CD8-positive, alpha-beta T cell (primary cell): ENCODE measurements at regions of chr3 and their contacts with region 1.

Region 1: GRCh38 chr3:11236595-11237461 is 35.4 kb upstream of the ATG7 start:
- DNase-seq: peak; percentile 65 to 86 (median 77)
- ATAC-seq: peak; percentile 68
- H3K4me3 ChIP-seq: no peak overlapping the region
- H3K4me3 Mint-ChIP-seq: no peak overlapping the region
- H3K27ac ChIP-seq: no peak overlapping the region
- H3K27ac Mint-ChIP-seq: no peak overlapping the region
- H3K4me1 ChIP-seq: no peaks in the 10 kb centered on the region
- H3K4me1 Mint-ChIP-seq: no peaks in the 10 kb centered on the region
- H3K27me3 ChIP-seq: no peaks in the 10 kb centered on the region
- H3K27me3 Mint-ChIP-seq: peaks cover 7% of the 10 kb centered on the region
- CTCF ChIP-seq: peak; percentile 95

Region 2: DNA sequence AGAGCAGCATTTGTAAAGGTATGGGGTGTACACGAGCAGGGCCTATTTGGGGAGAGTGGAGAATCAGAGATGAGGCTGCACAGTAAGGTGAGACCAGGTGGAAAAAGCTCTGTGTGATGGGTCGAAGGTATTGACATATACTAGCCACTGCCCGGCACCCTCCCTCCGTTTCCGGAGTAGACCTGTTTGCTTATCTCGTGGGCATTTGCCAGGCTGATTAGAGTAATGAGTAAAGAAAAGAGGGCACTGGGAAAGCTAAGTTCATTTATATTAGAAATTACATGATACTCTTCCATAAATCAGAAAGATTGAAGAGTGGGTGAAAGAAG is 10.8 kb before region 1 on chr3:
- CTCF ChIA-PET with region 1: interaction called, 10 read pairs
- POLR2A ChIA-PET with region 1: no interaction called
- intact Hi-C with region 1: no loop called
- DNase-seq: no peak
- ATAC-seq: no peak
- H3K4me3 ChIP-seq: no peak overlapping the region
- H3K4me3 Mint-ChIP-seq: no peak overlapping the region
- H3K27ac ChIP-seq: no peak overlapping the region
- H3K27ac Mint-ChIP-seq: no peak overlapping the region
- H3K4me1 ChIP-seq: peaks cover 12% of the 10 kb centered on the region
- H3K4me1 Mint-ChIP-seq: peaks cover 15% of the 10 kb centered on the region
- H3K27me3 ChIP-seq: no peaks in the 10 kb centered on the region
- H3K27me3 Mint-ChIP-seq: no peaks in the 10 kb centered on the region
- CTCF ChIP-seq: no peak

Region 3: GRCh38 chr3:11250902-11251813 is 14.3 kb after region 1 on chr3:
- CTCF ChIA-PET with region 1: interaction called, 28 read pairs
- POLR2A ChIA-PET with region 1: no interaction called
- intact Hi-C with region 1: no loop called
- DNase-seq: no peak
- ATAC-seq: peak; percentile 36
- H3K4me3 ChIP-seq: no peak overlapping the region
- H3K4me3 Mint-ChIP-seq: no peak overlapping the region
- H3K27ac ChIP-seq: no peak overlapping the region
- H3K27ac Mint-ChIP-seq: peak overlapping the region; percentile 53
- H3K4me1 ChIP-seq: peaks cover 6% of the 10 kb centered on the region
- H3K4me1 Mint-ChIP-seq: peaks cover 15% of the 10 kb centered on the region
- H3K27me3 ChIP-seq: no peaks in the 10 kb centered on the region
- H3K27me3 Mint-ChIP-seq: peaks cover 9% of the 10 kb centered on the region
- CTCF ChIP-seq: no peak

Region 4: GRCh38 chr3:11651900-11652299 is 415.1 kb after region 1 on chr3:
- CTCF ChIA-PET with region 1: interaction called, 9 read pairs
- POLR2A ChIA-PET with region 1: interaction called, 4 read pairs
- intact Hi-C with region 1: loop called in 1 of 2 experiments (anchors 1 kb)
- DNase-seq: peak in 2 of 9 experiments; percentile 56 to 67
- ATAC-seq: no peak
- H3K4me3 ChIP-seq: no peak overlapping the region
- H3K4me3 Mint-ChIP-seq: no peak overlapping the region
- H3K27ac ChIP-seq: no peak overlapping the region
- H3K27ac Mint-ChIP-seq: no peak overlapping the region
- H3K4me1 ChIP-seq: peaks cover 11% of the 10 kb centered on the region
- H3K4me1 Mint-ChIP-seq: peaks cover 13% of the 10 kb centered on the region
- H3K27me3 ChIP-seq: no peaks in the 10 kb centered on the region
- H3K27me3 Mint-ChIP-seq: no peaks in the 10 kb centered on the region
- CTCF ChIP-seq: peak; percentile 83